OCI-LY7 (cell line): ENCODE measurements at regions of chr16 and their contacts with region 1.

Region 1: GRCh38 chr16:89099905-89100304 is 6.3 kb downstream of the ACSF3 start:
- DNase-seq: peak; percentile 28
- H3K4me3 ChIP-seq: peak overlapping the region; percentile 99
- H3K27ac ChIP-seq: peak overlapping the region; percentile 98
- H3K4me1 ChIP-seq: peaks cover 53% of the 10 kb centered on the region
- CTCF ChIP-seq: no peak

Region 2: GRCh38 chr16:88941913-88942909 is 157.7 kb before region 1 on chr16:
- CTCF ChIA-PET with region 1: no interaction called
- POLR2A ChIA-PET with region 1: no interaction called
- intact Hi-C with region 1: loop called (anchors 2 kb)
- DNase-seq: peak; percentile 84
- H3K4me3 ChIP-seq: peak overlapping the region; percentile 47
- H3K27ac ChIP-seq: peak overlapping the region; percentile 2
- H3K4me1 ChIP-seq: peaks cover 49% of the 10 kb centered on the region
- CTCF ChIP-seq: peak; percentile 63

Region 3: GRCh38 chr16:88993166-88993761 is 106.6 kb before region 1 on chr16:
- CTCF ChIA-PET with region 1: interaction called, 3 read pairs
- POLR2A ChIA-PET with region 1: no interaction called
- intact Hi-C with region 1: loop called (anchors 5 kb)
- DNase-seq: peak; percentile 67
- H3K4me3 ChIP-seq: peak overlapping the region; percentile 43
- H3K27ac ChIP-seq: peak overlapping the region; percentile 99
- H3K4me1 ChIP-seq: peaks cover 42% of the 10 kb centered on the region
- CTCF ChIP-seq: no peak

Region 4: DNA sequence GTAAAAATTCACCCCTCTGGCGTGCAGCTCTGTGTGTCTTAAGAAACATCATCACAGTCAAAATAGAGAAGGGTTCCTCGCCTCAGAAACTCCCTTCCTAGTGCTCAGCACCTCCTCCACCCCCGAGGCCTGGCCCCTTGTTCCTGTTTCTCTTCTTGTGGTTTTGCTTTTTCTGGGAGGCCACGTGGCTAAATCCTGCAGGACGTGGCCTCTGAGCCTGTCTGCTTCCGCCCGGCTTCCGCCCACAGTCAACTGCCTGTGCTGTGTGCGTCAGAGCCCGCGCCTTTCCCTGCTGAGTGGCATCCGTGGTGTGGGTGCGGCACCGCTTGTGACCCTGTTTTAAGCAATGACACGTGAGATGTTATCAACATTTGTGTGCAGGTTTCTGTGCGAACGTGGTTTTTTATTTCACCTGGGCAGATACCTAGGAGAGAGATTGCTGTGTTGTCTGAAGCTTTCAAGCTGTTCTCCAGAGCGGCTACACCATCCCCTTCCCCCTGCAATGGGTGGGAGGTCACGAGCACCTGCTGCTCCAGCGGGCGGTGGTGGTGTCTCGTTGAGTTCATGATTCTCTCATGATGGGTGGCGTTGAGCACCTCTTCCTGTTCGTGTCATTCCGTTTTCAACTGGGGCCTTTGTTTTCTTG is 15.4 kb after region 1 on chr16:
- CTCF ChIA-PET with region 1: no interaction called
- POLR2A ChIA-PET with region 1: interaction called, 5 read pairs
- intact Hi-C with region 1: loop called (anchors 1 kb)
- DNase-seq: peak; percentile 91
- H3K4me3 ChIP-seq: peak overlapping the region; percentile 61
- H3K27ac ChIP-seq: peak overlapping the region; percentile 95
- H3K4me1 ChIP-seq: peaks cover 45% of the 10 kb centered on the region
- CTCF ChIP-seq: no peak

Region 5: DNA sequence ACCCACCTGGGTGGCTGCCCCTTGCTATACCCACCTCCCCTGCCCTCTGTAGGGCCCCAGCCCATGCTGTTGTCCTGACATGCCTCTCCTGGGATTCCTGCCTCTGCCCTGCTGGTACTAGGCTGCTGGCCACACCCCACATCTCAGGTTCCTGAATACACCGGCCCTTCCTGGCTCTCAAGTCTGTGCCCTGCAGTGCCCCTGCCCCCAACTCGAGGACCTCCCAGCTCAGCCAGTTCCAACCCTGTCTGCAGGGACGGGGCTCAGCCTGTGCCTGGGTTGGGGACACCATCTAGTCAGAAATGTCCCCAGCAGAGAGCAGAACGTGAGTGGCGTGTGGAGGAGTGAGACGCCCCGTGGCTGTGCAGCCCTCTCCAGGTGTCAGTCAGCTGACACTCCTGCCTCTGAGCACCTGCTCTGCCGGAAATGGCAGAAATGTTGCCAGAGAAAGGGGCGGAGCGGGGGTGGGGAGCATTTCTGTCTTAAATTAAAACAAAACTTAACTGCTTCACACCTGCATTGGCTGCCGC is 22.5 kb after region 1 on chr16:
- CTCF ChIA-PET with region 1: no interaction called
- POLR2A ChIA-PET with region 1: interaction called, 3 read pairs
- intact Hi-C with region 1: loop called (anchors 1 kb)
- DNase-seq: peak; percentile 96
- H3K4me3 ChIP-seq: peak overlapping the region; percentile 43
- H3K27ac ChIP-seq: peak overlapping the region; percentile 97
- H3K4me1 ChIP-seq: peaks cover 38% of the 10 kb centered on the region
- CTCF ChIP-seq: peak; percentile 50; the same call in 1 of the 2 replicates